ENCODE measurements at regions of chrX and their contacts with region 1.

Region 1: DNA sequence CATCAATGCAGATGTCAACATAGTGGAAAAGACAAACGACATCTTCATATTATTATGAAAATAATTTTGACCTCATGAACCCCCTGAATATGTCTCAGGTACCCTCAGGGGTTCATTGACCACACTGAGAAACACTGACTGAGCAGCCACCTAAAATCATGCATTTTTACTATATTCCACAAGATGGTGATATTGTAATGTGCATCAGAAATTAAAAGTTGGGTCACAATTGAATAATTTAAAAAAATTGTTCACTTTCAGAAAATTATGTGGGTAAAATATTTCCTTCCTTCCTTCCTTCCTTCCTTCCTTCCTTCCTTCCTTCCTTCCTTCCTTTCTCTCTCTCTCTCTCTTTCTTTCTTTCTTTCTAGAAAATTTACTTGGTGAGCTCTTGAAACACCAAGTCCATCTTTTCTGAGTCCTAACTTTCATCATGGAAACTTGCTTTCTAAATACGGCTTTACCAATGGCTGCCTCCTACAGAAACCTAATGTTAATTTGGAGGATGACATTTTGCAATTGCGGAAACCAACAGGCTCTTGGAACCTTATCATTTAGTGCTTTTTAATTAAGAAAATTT is 103.6 kb downstream of the RTL3 start:
- DNase-seq: peak; percentile 21
- H3K4me3 ChIP-seq: no peak overlapping the region
- H3K27ac ChIP-seq: no peak overlapping the region
- H3K4me1 ChIP-seq: no peaks in the 10 kb centered on the region
- H3K27me3 ChIP-seq: no peaks in the 10 kb centered on the region

Region 2: GRCh38 chrX:78886550-78886949 is 331.1 kb after region 1 on chrX:
- in situ Hi-C with region 1: loop called (anchors 10 kb)
- DNase-seq: peak; percentile 43
- H3K4me3 ChIP-seq: no peak overlapping the region
- H3K27ac ChIP-seq: no peak overlapping the region
- H3K4me1 ChIP-seq: no peaks in the 10 kb centered on the region
- H3K27me3 ChIP-seq: no peaks in the 10 kb centered on the region

Region 3: DNA sequence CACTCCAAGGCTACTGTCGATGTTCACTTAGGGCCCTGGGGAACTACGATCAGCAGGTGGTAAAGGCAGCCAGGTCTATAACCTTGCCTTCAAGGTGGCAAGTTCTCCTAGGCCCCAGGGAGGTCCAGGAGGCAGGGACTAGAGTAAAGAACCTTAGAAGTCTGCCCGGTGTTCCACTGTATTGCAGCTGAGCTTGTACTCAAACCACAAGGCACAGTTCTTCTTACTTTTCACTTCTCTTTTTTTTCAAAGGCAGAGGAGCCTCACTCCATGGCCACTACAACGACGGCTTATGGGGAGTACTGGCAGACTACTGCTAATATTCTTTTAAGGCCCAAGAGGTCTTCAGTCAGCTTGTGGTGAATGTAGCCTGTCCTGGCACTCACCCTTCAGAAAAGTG is 510.2 kb after region 1 on chrX:
- in situ Hi-C with region 1: loop called (anchors 25 kb)
- DNase-seq: no peak
- H3K4me3 ChIP-seq: no peak overlapping the region
- H3K27ac ChIP-seq: no peak overlapping the region
- H3K4me1 ChIP-seq: no peaks in the 10 kb centered on the region
- H3K27me3 ChIP-seq: no peaks in the 10 kb centered on the region

Measured in GM23248 (cell line).